ENCODE measurements at regions of chr5 and their contacts with region 1.

Region 1: DNA sequence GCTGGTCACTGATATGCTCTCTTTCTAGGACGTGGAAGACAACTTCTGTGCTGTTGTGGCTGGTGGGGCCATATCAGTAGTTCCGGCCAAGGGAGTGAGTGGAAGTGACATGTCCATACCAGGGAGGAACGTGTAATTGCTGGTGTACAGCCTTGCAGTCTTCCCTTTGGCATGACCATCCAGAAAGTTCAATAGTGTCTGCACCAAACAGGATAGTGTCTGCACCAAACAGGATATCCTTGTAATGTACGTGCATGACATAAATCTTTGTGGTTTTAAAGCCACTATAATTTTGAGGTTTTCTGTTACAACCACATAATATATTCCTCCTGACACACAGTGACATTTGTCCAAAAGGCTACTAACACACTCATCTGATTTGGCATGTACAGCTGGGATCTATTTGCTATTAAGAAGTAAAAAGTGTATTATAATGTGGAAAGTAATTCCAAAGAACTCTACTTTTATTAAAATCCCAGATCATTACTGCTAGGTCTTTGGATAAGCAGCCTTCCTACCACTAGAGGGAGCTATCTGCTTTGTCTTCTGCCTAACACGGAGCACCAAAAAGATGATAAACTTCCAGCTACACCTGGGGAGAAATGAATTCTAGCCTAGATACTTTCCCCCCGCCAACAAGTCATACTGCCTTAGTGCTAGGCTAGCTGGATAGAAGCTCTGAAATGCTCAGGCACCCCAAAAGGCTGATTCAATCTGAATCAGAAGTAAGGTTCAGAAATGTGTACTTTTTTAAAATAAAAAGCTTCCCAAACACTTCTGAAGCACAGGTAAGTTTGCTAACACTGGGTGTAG is 52.7 kb downstream of the RNF145 start:
- ATAC-seq: peak; percentile 52 to 83 (median 70)
- H3K4me3 ChIP-seq: no peak overlapping the region
- H3K27ac ChIP-seq: no peak overlapping the region
- H3K4me1 ChIP-seq: no peaks in the 10 kb centered on the region

Region 2: GRCh38 chr5:159262859-159263567 is 106.4 kb after region 1 on chr5 and contains the start of gene UBLCP1:
- in situ Hi-C with region 1: loop called in 2 of 9 experiments (anchors 25 kb)
- ATAC-seq: peak; percentile 88 to 96 (median 92)
- H3K4me3 ChIP-seq: peak within 1 kb of the TSS; percentile 68 to 99 (median 88)
- H3K27ac ChIP-seq: peak within 1 kb of the TSS; percentile 92 to 94
- H3K4me1 ChIP-seq: peaks cover 12 to 14% of the 10 kb centered on the region in 2 donors
- total RNA-seq, gene UBLCP1: 21.8 to 42.0 (median 29.3) TPM